CD8-positive, alpha-beta T cell (primary cell): ENCODE measurements at regions of chr10 and their contacts with region 1.

Region 1: DNA sequence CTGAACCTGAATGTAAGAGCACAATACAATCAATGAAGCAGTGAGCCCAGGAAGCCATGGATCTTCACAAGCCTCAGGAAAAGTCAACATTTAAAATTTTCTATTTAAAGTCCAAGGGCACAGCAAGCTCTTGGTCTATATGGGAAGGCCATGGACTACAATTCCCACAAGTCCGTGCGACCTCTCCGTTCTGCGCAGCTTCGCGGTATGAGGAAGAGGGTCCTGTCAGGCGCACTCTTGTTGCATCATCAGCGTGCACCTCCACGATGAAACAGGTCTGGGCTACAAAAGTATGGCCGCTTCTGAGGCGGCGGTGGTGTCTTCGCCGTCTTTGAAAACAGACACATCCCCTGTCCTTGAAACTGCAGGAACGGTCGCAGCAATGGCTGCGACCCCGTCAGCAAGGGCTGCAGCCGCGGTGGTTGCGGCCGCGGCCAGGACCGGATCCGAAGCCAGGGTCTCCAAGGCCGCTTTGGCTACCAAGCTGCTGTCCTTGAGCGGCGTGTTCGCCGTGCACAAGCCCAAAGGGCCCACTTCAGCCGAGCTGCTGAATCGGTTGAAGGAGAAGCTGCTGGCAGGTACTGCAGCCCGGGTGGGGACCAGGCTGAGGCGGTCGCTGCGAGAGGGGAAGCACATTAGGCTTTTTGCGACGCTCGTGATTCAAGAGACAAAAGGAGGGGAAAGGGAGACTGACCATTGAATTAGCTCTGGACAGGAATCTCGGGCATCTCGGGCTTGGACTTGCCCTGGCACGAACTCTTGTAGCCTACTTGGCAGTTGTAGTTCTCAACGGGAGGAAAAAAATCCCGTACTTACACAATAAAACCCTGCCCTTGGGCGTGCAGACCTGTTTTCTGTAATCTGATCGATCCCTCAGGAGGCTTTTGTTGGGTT is at the start of gene TRUB1:
- DNase-seq: peak; percentile 75 to 97 (median 90)
- ATAC-seq: peak; percentile 100
- H3K4me3 ChIP-seq: peak within 1 kb of the TSS; percentile 85 to 88
- H3K4me3 Mint-ChIP-seq: peak within 1 kb of the TSS; percentile 96
- H3K27ac ChIP-seq: peak within 1 kb of the TSS; percentile 73 to 91
- H3K27ac Mint-ChIP-seq: peak within 1 kb of the TSS; percentile 97
- H3K4me1 ChIP-seq: peaks cover 15% of the 10 kb centered on the region
- H3K4me1 Mint-ChIP-seq: peaks cover 37% of the 10 kb centered on the region
- H3K27me3 ChIP-seq: no peaks in the 10 kb centered on the region
- H3K27me3 Mint-ChIP-seq: no peaks in the 10 kb centered on the region
- CTCF ChIP-seq: no peak
- total RNA-seq, gene TRUB1: 7.7 to 9.7 TPM

Region 2: GRCh38 chr10:113960617-113961181 is 977.5 kb before region 1 on chr10:
- CTCF ChIA-PET with region 1: no interaction called
- POLR2A ChIA-PET with region 1: no interaction called
- intact Hi-C with region 1: loop called in 1 of 2 experiments (anchors 5 kb)
- DNase-seq: peak in 7 of 9 experiments; percentile 13 to 86 (median 56)
- ATAC-seq: peak; percentile 22
- H3K4me3 ChIP-seq: peak overlapping the region in 1 of 2 experiments; percentile 17
- H3K4me3 Mint-ChIP-seq: peak overlapping the region; percentile 46
- H3K27ac ChIP-seq: peak overlapping the region; percentile 20 to 68
- H3K27ac Mint-ChIP-seq: peak overlapping the region; percentile 83
- H3K4me1 ChIP-seq: peaks cover 36% of the 10 kb centered on the region
- H3K4me1 Mint-ChIP-seq: peaks cover 37% of the 10 kb centered on the region
- H3K27me3 ChIP-seq: no peaks in the 10 kb centered on the region
- H3K27me3 Mint-ChIP-seq: peaks cover 9% of the 10 kb centered on the region
- CTCF ChIP-seq: no peak

Region 3: DNA sequence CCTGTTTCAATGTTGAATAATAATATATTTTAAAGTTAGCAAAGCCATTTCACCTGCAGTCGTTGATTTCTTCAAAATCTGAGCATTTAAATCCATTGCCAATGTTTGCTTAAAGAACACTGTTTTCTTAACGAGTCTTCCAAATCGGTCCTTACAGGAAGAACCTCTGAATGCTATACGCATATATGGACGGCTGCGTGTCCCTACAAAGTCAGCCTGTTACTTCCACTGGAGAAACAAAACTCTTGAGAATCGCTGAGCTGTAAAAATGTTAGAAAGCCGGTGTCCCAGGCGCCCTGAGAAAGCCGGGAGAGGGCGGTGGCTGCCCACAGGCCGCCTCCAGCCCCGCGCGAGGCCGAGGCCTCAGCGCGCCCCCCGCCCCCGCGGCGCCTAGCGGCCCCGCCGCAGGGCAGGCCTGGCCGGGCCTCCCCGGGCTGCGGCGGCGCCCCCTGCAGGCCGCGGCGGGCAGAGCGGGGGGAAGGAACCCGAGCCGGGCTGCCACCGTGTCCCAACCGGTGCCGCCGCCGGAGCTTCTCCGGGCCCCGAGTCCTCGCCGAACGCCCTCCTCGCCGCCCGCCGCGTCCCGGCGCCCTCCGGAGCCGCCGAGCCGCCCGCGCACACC is 116.8 kb before region 1 on chr10 and contains the start of gene FHIP2A:
- CTCF ChIA-PET with region 1: interaction called, 4 read pairs
- POLR2A ChIA-PET with region 1: interaction called, 7 read pairs
- intact Hi-C with region 1: loop called (anchors 1 to 5 kb)
- DNase-seq: peak; percentile 73 to 91 (median 82)
- ATAC-seq: peak; percentile 93
- H3K4me3 ChIP-seq: peak within 1 kb of the TSS; percentile 70 to 75
- H3K4me3 Mint-ChIP-seq: peak within 1 kb of the TSS; percentile 95
- H3K27ac ChIP-seq: peak within 1 kb of the TSS; percentile 78 to 79
- H3K27ac Mint-ChIP-seq: peak within 1 kb of the TSS; percentile 94
- H3K4me1 ChIP-seq: peaks cover 11% of the 10 kb centered on the region
- H3K4me1 Mint-ChIP-seq: peaks cover 38% of the 10 kb centered on the region
- H3K27me3 ChIP-seq: no peaks in the 10 kb centered on the region
- H3K27me3 Mint-ChIP-seq: peaks cover 2% of the 10 kb centered on the region
- CTCF ChIP-seq: peak; percentile 35
- total RNA-seq, gene FHIP2A: 62.0 to 66.4 TPM

Region 4: GRCh38 chr10:115335366-115335765 is 397.2 kb after region 1 on chr10:
- CTCF ChIA-PET with region 1: no interaction called
- POLR2A ChIA-PET with region 1: no interaction called
- intact Hi-C with region 1: no loop called
- DNase-seq: no peak
- ATAC-seq: no peak
- H3K4me3 ChIP-seq: no peak overlapping the region
- H3K4me3 Mint-ChIP-seq: no peak overlapping the region
- H3K27ac ChIP-seq: no peak overlapping the region
- H3K27ac Mint-ChIP-seq: no peak overlapping the region
- H3K4me1 ChIP-seq: no peaks in the 10 kb centered on the region
- H3K4me1 Mint-ChIP-seq: no peaks in the 10 kb centered on the region
- H3K27me3 ChIP-seq: no peaks in the 10 kb centered on the region
- H3K27me3 Mint-ChIP-seq: no peaks in the 10 kb centered on the region
- CTCF ChIP-seq: no peak